Caco-2 (cell line): ENCODE measurements at regions of chr5 and their contacts with region 1.

Region 1: DNA sequence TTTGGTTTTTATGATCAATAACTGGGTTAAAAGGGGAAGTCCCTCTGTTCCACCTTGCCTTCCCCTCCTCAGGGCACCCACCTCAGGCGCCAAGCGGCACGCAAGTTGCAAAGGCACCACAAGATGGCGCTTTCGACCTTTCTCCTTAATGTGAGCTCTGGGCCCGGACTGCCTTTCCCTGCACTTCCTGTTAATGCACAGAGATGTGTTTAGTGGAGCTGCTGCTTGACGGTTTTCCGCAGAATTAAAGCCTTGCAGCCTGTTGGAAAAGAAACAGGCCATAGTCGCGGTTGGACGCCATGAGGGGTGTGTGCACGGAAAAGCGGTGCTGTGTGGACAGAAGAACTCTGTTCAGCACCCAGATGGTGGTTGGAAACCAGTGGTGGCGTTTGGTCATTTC is 17.9 kb downstream of the CXCL14 start:
- DNase-seq: peak; percentile 83 to 86
- H3K4me3 ChIP-seq: no peak overlapping the region
- H3K4me3 Mint-ChIP-seq: peak overlapping the region; percentile 27
- H3K27ac Mint-ChIP-seq: no peak overlapping the region
- H3K4me1 ChIP-seq: no peaks in the 10 kb centered on the region; the same call in 1 of the 2 replicates
- H3K4me1 Mint-ChIP-seq: peaks cover 12% of the 10 kb centered on the region
- H3K27me3 ChIP-seq: no peaks in the 10 kb centered on the region
- H3K27me3 Mint-ChIP-seq: peaks cover 5% of the 10 kb centered on the region
- CTCF ChIP-seq: peak; percentile 87 to 92

Region 2: GRCh38 chr5:135829681-135830383 is 269.0 kb after region 1 on chr5:
- CTCF ChIA-PET with region 1: interaction called, 28 read pairs
- POLR2A ChIA-PET with region 1: no interaction called
- intact Hi-C with region 1: loop called (anchors 1 kb)
- DNase-seq: peak; percentile 63 to 75
- H3K4me3 ChIP-seq: no peak overlapping the region
- H3K4me3 Mint-ChIP-seq: no peak overlapping the region
- H3K27ac Mint-ChIP-seq: no peak overlapping the region
- H3K4me1 ChIP-seq: no peaks in the 10 kb centered on the region
- H3K4me1 Mint-ChIP-seq: peaks cover 7% of the 10 kb centered on the region
- H3K27me3 ChIP-seq: peaks cover 5% of the 10 kb centered on the region; the same call in 1 of the 2 replicates
- H3K27me3 Mint-ChIP-seq: peaks cover 39% of the 10 kb centered on the region
- CTCF ChIP-seq: peak; percentile 86 to 93